ENCODE measurements at regions of chr4 and their contacts with region 1.

Region 1: GRCh38 chr4:21765810-21766407 is 182.7 kb downstream of the KCNIP4 start:
- DNase-seq: no peak
- ATAC-seq: peak; percentile 82
- H3K4me3 ChIP-seq: no peak overlapping the region
- H3K27ac ChIP-seq: no peak overlapping the region
- H3K4me1 ChIP-seq: no peaks in the 10 kb centered on the region
- H3K27me3 ChIP-seq: no peaks in the 10 kb centered on the region
- CTCF ChIP-seq: peak; percentile 78 to 91 (median 78)
- EP300 ChIP-seq: no peak
- POLR2A ChIP-seq: no peak
- RAD21 ChIP-seq: peak; percentile 62

Region 2: GRCh38 chr4:21512353-21512752 is 253.6 kb before region 1 on chr4:
- CTCF ChIA-PET with region 1: interaction called, 105 read pairs
- POLR2A ChIA-PET with region 1: no interaction called
- RAD21 ChIA-PET with region 1: interaction called, 6 read pairs
- SMC1A ChIA-PET with region 1: interaction called, 8 read pairs
- in situ Hi-C with region 1: loop called (anchors 5 kb)
- intact Hi-C with region 1: loop called (anchors 1 kb)
- DNase-seq: no peak
- ATAC-seq: peak; percentile 49; the same call in 2 of the 3 replicates
- H3K4me3 ChIP-seq: no peak overlapping the region
- H3K27ac ChIP-seq: no peak overlapping the region
- H3K4me1 ChIP-seq: no peaks in the 10 kb centered on the region
- H3K27me3 ChIP-seq: no peaks in the 10 kb centered on the region
- CTCF ChIP-seq: peak in 2 of 3 experiments; percentile 19 to 47; a peak in 2 of 6 replicates
- EP300 ChIP-seq: no peak
- POLR2A ChIP-seq: no peak
- RAD21 ChIP-seq: peak; percentile 59

Region 3: DNA sequence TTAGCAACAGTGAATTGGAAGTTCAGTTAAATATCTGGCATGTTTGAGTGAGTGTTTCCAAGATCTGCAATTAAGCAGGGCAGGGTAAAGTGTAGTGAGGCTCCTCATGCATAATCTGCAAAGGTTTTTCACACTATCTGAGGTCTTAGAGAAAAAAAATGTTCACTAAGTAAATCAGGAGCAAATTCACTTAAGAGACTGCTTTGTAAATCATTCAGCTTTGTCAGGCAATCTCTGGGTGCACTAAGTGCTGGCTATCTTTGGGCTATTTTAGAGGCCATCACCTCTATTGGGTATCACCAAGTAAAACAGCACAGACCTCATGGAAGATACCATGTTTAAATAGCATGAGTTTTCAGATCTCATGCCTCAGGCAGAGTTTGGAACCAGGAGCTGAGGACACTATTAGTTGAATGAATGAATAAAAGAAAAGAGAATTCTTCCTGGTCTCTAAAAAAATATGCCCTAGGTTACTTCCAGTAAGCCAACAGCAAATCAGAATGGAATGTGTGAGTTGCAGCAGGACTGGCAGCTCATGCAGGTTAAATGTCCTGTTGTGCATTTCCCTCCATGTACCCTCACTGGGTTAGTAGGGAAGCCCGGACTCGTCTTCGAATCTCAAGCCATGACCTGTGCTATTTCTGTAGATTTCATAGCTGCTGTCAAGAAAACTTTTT is 12.7 kb before region 1 on chr4:
- CTCF ChIA-PET with region 1: interaction called, 15 read pairs
- POLR2A ChIA-PET with region 1: no interaction called
- RAD21 ChIA-PET with region 1: no interaction called
- SMC1A ChIA-PET with region 1: interaction called, 5 read pairs
- in situ Hi-C with region 1: no loop called
- intact Hi-C with region 1: no loop called
- DNase-seq: no peak
- ATAC-seq: no peak
- H3K4me3 ChIP-seq: no peak overlapping the region
- H3K27ac ChIP-seq: no peak overlapping the region
- H3K4me1 ChIP-seq: no peaks in the 10 kb centered on the region
- H3K27me3 ChIP-seq: no peaks in the 10 kb centered on the region
- CTCF ChIP-seq: no peak
- EP300 ChIP-seq: no peak
- POLR2A ChIP-seq: no peak
- RAD21 ChIP-seq: no peak

Region 4: GRCh38 chr4:21827575-21827974 is 61.7 kb after region 1 on chr4:
- CTCF ChIA-PET with region 1: no interaction called
- POLR2A ChIA-PET with region 1: no interaction called
- RAD21 ChIA-PET with region 1: no interaction called
- SMC1A ChIA-PET with region 1: no interaction called
- in situ Hi-C with region 1: no loop called
- intact Hi-C with region 1: no loop called
- DNase-seq: no peak
- ATAC-seq: no peak
- H3K4me3 ChIP-seq: no peak overlapping the region
- H3K27ac ChIP-seq: no peak overlapping the region
- H3K4me1 ChIP-seq: no peaks in the 10 kb centered on the region
- H3K27me3 ChIP-seq: no peaks in the 10 kb centered on the region
- CTCF ChIP-seq: no peak
- EP300 ChIP-seq: no peak
- POLR2A ChIP-seq: no peak
- RAD21 ChIP-seq: no peak

Region 5: GRCh38 chr4:21901831-21902230 is 135.9 kb after region 1 on chr4:
- CTCF ChIA-PET with region 1: no interaction called
- POLR2A ChIA-PET with region 1: no interaction called
- RAD21 ChIA-PET with region 1: no interaction called
- SMC1A ChIA-PET with region 1: no interaction called
- in situ Hi-C with region 1: no loop called
- intact Hi-C with region 1: no loop called
- DNase-seq: no peak
- ATAC-seq: no peak
- H3K4me3 ChIP-seq: no peak overlapping the region
- H3K27ac ChIP-seq: no peak overlapping the region
- H3K4me1 ChIP-seq: no peaks in the 10 kb centered on the region
- H3K27me3 ChIP-seq: no peaks in the 10 kb centered on the region
- CTCF ChIP-seq: no peak
- EP300 ChIP-seq: no peak
- POLR2A ChIP-seq: no peak
- RAD21 ChIP-seq: no peak